Psoas muscle (tissue), 8 donors: ENCODE measurements at regions of chr3 and their contacts with region 1.

Region 1: GRCh38 chr3:187164885-187165543 is 25.7 kb upstream of the RPL39L start:
- DNase-seq: no peak
- ATAC-seq: peak; percentile 54 to 85 (median 79)
- H3K4me3 ChIP-seq: no peak overlapping the region
- H3K27ac ChIP-seq: no peak overlapping the region
- H3K4me1 ChIP-seq: peaks cover 4% of the 10 kb centered on the region
- H3K27me3 ChIP-seq: no peaks in the 10 kb centered on the region
- CTCF ChIP-seq: peak; percentile 80

Region 2: GRCh38 chr3:186617038-186617946 is 547.7 kb before region 1 on chr3:
- intact Hi-C with region 1: loop called (anchors 5 to 10 kb)
- DNase-seq: peak; percentile 75 to 86
- ATAC-seq: peak; percentile 90 to 95 (median 92)
- H3K4me3 ChIP-seq: peak overlapping the region; percentile 12
- H3K27ac ChIP-seq: no peak overlapping the region
- H3K4me1 ChIP-seq: no peaks in the 10 kb centered on the region
- H3K27me3 ChIP-seq: peaks cover 0 to 29% (median 0%) of the 10 kb centered on the region in 3 donors
- CTCF ChIP-seq: peak; percentile 70

Region 3: GRCh38 chr3:186849374-186849975 is 315.5 kb before region 1 on chr3:
- intact Hi-C with region 1: loop called (anchors 2 kb)
- DNase-seq: no peak
- ATAC-seq: peak; percentile 48 to 91 (median 88)
- H3K4me3 ChIP-seq: no peak overlapping the region
- H3K27ac ChIP-seq: no peak overlapping the region
- H3K4me1 ChIP-seq: no peaks in the 10 kb centered on the region
- H3K27me3 ChIP-seq: peaks cover 0 to 13% (median 0%) of the 10 kb centered on the region in 3 donors
- CTCF ChIP-seq: peak; percentile 58

Region 4: DNA sequence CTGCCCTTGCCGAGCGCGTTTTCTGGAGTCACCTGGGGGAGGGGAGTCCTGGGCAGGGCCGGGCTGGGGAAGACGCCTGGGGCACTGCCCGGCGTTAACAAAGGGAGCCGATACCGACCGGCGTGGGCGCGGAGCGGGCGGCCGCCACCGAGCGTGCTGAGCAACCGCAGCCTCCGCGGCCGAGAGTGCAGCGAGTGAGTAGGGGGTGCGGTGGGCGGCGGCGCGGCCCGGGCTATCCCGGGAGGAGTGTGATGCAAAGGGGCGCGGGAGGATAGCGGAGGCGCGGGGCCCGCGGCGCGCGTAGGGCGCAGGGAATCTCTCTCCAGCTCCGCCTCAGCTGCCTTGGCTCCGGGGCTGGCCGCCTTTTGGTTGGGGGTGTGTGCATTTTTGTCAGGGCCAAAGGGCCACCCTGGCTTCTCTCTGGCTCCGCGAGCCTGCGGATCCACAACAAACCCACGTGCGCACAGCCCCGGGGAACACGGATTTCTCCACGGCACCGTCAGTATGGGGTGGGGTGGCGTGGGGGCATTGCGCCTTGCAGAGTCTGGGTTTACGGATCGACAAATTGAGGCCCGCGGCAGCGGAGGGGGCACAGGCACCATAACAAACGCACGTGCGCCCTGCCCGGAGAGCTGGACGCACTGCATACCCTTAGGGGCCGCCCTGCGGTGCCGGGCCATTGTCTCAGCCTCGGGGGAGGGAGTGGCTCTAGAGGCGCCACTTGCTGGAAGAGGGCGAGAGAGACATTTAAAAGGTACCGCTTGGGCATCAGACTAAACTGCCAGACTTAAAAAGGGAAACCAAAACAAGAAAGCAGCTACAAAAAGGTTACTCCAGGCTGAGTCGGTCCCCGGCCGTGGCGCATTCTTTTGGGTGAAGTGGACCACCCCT is 234.1 kb before region 1 on chr3:
- intact Hi-C with region 1: loop called (anchors 10 kb)
- DNase-seq: peak; percentile 62 to 82
- ATAC-seq: peak; percentile 79 to 86 (median 85)
- H3K4me3 ChIP-seq: peak overlapping the region; percentile 99
- H3K27ac ChIP-seq: peak overlapping the region; percentile 89
- H3K4me1 ChIP-seq: peaks cover 27% of the 10 kb centered on the region
- H3K27me3 ChIP-seq: no peaks in the 10 kb centered on the region
- CTCF ChIP-seq: peak; percentile 14

Region 5: DNA sequence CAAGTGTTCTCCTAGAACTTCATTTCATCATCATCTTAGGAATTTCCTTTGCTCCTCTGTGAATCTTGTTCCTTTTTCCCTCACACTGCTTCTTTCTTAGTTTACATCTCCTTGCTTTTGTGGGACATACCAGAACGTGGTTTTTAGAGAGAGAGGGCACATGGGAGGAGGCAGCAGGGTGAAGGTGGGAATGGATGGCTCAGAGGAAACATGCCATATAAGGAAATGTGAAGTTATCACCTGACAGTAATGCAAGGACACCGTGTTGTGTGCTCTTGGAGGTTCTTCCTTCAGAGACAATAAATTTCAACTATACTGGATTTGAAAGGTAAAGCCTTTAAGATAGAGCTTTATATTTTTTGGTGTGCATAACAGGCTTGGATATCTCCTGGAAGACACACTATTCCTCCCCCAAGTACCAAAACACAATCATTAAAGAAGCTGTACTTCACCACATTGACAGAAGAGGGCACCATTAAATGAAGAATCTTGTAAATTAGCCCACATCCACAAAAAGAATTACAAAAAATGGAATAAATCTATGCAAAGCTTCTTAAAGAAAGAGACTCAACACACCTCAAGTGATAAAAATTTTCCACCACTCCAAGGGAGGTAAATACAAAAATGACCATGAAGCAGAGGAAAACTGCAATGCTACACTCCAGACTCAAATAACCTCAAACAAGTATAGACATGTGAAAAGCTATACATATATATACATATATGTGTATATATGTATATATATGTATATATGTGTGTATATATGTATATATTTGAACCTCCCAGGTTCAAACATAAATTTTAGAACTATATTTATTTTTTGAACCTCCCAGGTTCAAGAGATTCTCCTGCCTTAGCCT is 51.9 kb before region 1 on chr3:
- intact Hi-C with region 1: loop called in 1 of 2 experiments (anchors 5 kb)
- DNase-seq: no peak
- ATAC-seq: no peak
- H3K4me3 ChIP-seq: no peak overlapping the region
- H3K27ac ChIP-seq: no peak overlapping the region
- H3K4me1 ChIP-seq: no peaks in the 10 kb centered on the region
- H3K27me3 ChIP-seq: no peaks in the 10 kb centered on the region
- CTCF ChIP-seq: peak; percentile 55

Region 6: GRCh38 chr3:187210545-187211327 is 45.7 kb after region 1 on chr3:
- intact Hi-C with region 1: no loop called
- DNase-seq: no peak
- ATAC-seq: peak; percentile 60 to 79 (median 62)
- H3K4me3 ChIP-seq: no peak overlapping the region
- H3K27ac ChIP-seq: peak overlapping the region; percentile 27
- H3K4me1 ChIP-seq: peaks cover 31% of the 10 kb centered on the region
- H3K27me3 ChIP-seq: no peaks in the 10 kb centered on the region
- CTCF ChIP-seq: no peak